ENCODE measurements at regions of chr2 and their contacts with region 1.

Region 1: DNA sequence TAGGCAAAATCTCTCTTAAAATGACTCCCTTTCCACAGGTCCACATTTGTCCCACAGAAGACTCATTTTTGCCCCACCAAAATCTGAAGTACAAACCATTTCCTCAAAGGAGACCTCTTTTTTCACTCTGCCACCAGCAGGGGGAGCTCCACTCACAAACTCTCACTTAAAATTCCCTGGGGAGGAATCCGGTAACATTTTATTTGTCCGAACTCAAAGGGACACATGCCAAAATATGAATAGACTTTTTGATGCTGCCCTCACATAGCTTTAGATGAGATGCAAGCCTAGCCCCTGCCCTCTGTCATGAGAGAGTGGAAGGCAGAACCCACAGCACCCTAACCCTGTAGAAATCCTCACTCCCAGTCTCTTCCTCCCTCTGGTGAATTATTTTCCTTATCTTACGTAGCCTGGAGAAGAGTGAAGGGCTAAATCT is 57.1 kb downstream of the RMDN2 start:
- DNase-seq: peak; percentile 12 to 45
- ATAC-seq: peak in 1 of 2 donors; percentile 18
- H3K4me3 ChIP-seq: peak overlapping the region in 1 of 4 donors; percentile 33
- H3K27ac ChIP-seq: no peak overlapping the region
- H3K4me1 ChIP-seq: peaks cover 0 to 7% of the 10 kb centered on the region in 2 donors
- H3K27me3 ChIP-seq: no peaks in the 10 kb centered on the region
- CTCF ChIP-seq: peak; percentile 60 to 84 (median 77)
- POLR2A ChIP-seq: no peak

Region 2: DNA sequence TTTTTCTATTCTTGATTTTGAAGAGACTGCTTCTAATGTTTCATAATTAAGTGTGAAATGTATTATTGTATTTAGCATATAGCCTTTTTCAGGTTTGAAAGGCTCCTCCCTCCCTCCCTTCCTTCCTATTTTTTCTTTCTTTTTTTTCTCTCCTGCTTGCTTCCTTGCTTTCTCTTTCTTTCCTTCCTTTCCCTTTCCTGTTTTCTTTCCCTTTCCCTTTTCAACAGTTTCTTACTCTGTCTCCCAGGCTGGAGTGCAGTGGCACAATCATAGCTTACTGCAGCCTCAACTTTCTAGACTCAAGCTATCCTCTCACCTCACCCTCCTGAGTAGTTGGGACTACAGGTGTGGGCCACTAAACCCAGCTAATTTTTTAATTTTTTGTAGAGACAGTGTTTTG is 12.4 kb before region 1 on chr2:
- in situ Hi-C with region 1: no loop called
- intact Hi-C with region 1: no loop called
- DNase-seq: no peak
- ATAC-seq: no peak
- H3K4me3 ChIP-seq: no peak overlapping the region
- H3K27ac ChIP-seq: no peak overlapping the region
- H3K4me1 ChIP-seq: no peaks in the 10 kb centered on the region
- H3K27me3 ChIP-seq: no peaks in the 10 kb centered on the region
- CTCF ChIP-seq: no peak
- POLR2A ChIP-seq: no peak

Region 3: DNA sequence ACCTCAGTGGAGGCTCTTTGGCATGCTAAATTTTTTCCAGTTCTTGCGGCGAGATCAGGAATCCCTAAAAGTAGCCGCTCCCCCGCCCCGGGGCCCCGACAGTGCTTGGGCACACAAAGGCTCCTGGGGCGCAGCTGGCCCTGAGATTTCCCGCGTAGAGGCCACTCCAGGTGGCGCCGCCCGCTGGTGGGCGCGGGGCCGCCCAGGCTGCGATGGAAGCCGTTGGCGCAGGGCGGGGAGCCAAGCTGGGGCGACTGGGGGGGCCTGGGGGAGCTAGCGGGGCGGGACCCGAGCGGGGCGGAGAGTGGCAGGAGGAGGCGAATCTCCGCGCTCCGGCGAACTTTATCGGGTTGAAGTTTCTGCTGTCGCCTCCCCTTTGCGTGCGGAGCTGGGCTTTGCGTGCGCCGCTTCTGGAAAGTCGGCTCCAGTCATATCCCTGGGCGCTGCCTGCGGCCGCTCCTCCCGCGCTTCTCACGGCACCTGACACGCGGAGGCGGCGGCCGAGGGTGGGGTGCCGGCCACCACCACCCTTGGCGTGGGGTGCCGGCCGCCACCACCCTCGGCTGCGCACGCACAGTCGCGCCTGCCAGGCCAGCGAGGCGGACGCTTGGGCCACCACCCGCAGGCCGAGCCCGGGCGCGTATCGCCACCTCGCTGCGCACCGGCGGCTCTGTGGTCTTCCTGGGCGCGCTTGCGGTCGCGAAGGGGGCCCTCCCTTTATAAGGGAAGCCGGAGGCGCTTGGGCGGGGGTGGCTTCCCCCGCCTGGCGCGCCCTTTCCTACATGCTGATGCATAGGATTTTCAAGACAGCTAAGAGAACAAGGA is 94.7 kb after region 1 on chr2:
- in situ Hi-C with region 1: no loop called
- intact Hi-C with region 1: loop called (anchors 5 kb)
- DNase-seq: peak; percentile 34 to 35
- ATAC-seq: peak; percentile 40 to 53
- H3K4me3 ChIP-seq: peak overlapping the region; percentile 59 to 72 (median 66)
- H3K27ac ChIP-seq: peak overlapping the region; percentile 64 to 75 (median 73)
- H3K4me1 ChIP-seq: peaks cover 0 to 18% of the 10 kb centered on the region in 2 donors
- H3K27me3 ChIP-seq: peaks cover 33 to 41% (median 37%) of the 10 kb centered on the region in 3 donors
- CTCF ChIP-seq: peak in 2 of 5 experiments; percentile 26 to 39
- POLR2A ChIP-seq: peak in 1 of 2 donors; percentile 4

Region 4: GRCh38 chr2:38092196-38092922 is 110.2 kb after region 1 on chr2:
- in situ Hi-C with region 1: no loop called
- intact Hi-C with region 1: no loop called
- DNase-seq: peak; percentile 46 to 50
- ATAC-seq: peak; percentile 54 to 78
- H3K4me3 ChIP-seq: no peak overlapping the region
- H3K27ac ChIP-seq: peak overlapping the region; percentile 34 to 44 (median 41)
- H3K4me1 ChIP-seq: peaks cover 0 to 22% of the 10 kb centered on the region in 2 donors
- H3K27me3 ChIP-seq: peaks cover 0 to 4% (median 0%) of the 10 kb centered on the region in 3 donors
- CTCF ChIP-seq: no peak
- POLR2A ChIP-seq: peak in 1 of 2 donors; percentile 16

Region 5: DNA sequence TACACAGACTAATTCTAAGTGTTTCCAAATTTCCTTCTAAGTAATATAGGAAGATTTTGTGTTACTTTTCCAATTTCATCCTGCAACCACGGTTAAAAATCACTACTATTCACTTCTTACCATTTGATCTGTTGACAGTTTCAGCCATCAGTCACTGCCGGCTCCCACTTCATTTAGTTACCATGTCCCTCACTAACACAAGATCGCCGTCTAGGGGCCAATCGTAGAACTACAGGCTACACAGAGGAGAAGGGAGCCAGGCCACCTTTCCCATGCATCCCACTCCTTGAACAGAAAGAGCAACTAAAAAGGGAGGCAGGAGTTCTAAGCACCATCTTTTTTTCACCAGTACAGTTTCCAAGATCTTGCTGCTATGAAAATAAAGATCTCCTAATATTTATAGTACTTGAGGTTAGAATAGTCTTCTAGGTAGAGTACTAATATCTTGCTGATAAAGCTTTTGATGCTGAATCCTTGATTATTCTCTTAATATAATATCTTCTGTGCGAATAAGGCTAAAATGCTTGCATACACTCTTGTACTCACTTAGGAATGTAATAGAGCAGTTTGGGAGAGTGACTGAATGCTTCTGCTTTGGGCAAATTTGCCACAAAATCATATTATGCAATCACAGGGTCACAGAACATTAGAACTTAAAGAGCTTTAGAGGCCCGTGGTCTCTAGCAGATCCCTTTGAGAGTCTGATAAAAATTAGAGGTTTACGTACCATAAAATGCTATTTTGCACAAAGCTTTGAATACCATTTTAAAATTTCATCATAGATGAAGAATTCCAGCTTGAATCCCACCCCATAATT is 133.3 kb after region 1 on chr2:
- in situ Hi-C with region 1: no loop called
- intact Hi-C with region 1: loop called (anchors 10 kb)
- DNase-seq: peak; percentile 43 to 54
- ATAC-seq: peak; percentile 64 to 73
- H3K4me3 ChIP-seq: no peak overlapping the region
- H3K27ac ChIP-seq: peak overlapping the region in 2 of 4 donors; percentile 18 to 25
- H3K4me1 ChIP-seq: peaks cover 0 to 4% of the 10 kb centered on the region in 2 donors
- H3K27me3 ChIP-seq: no peaks in the 10 kb centered on the region
- CTCF ChIP-seq: peak; percentile 55 to 76 (median 62)
- POLR2A ChIP-seq: no peak

Measured in gastrocnemius medialis (tissue), 4 donors.